ENCODE measurements at regions of chr5 and their contacts with region 1.

Region 1: GRCh38 chr5:116068028-116068632 is 16.7 kb upstream of the COMMD10 start:
- DNase-seq: no peak
- ATAC-seq: no peak
- H3K4me3 Mint-ChIP-seq: no peak overlapping the region
- H3K27ac Mint-ChIP-seq: no peak overlapping the region
- H3K4me1 Mint-ChIP-seq: no peaks in the 10 kb centered on the region
- H3K27me3 Mint-ChIP-seq: no peaks in the 10 kb centered on the region
- CTCF ChIP-seq: peak; percentile 84

Region 2: GRCh38 chr5:115888027-115888426 is 180.1 kb before region 1 on chr5:
- CTCF ChIA-PET with region 1: interaction called, 16 read pairs
- POLR2A ChIA-PET with region 1: no interaction called
- intact Hi-C with region 1: loop called (anchors 1 kb)
- DNase-seq: no peak
- ATAC-seq: no peak
- H3K4me3 Mint-ChIP-seq: no peak overlapping the region
- H3K27ac Mint-ChIP-seq: no peak overlapping the region
- H3K4me1 Mint-ChIP-seq: no peaks in the 10 kb centered on the region
- H3K27me3 Mint-ChIP-seq: no peaks in the 10 kb centered on the region
- CTCF ChIP-seq: no peak

Region 3: GRCh38 chr5:116038817-116039216 is 29.3 kb before region 1 on chr5:
- CTCF ChIA-PET with region 1: interaction called, 14 read pairs
- POLR2A ChIA-PET with region 1: no interaction called
- intact Hi-C with region 1: loop called (anchors 2 kb)
- DNase-seq: peak; percentile 43
- ATAC-seq: peak; percentile 98
- H3K4me3 Mint-ChIP-seq: no peak overlapping the region
- H3K27ac Mint-ChIP-seq: peak overlapping the region; percentile 83
- H3K4me1 Mint-ChIP-seq: peaks cover 51% of the 10 kb centered on the region
- H3K27me3 Mint-ChIP-seq: no peaks in the 10 kb centered on the region
- CTCF ChIP-seq: no peak